Panc1 (cell line): ENCODE measurements at regions of chr16 and their contacts with region 1.

Region 1: GRCh38 chr16:16861546-16861945 is 482.6 kb downstream of the NPIPA7 start:
- DNase-seq: peak; percentile 46
- ATAC-seq: peak; percentile 70
- H3K4me3 ChIP-seq: no peak overlapping the region
- H3K27ac ChIP-seq: no peak overlapping the region
- H3K4me1 ChIP-seq: no peaks in the 10 kb centered on the region
- H3K27me3 ChIP-seq: peaks cover 6% of the 10 kb centered on the region; the same call in 1 of the 2 replicates
- CTCF ChIP-seq: peak; percentile 88

Region 2: GRCh38 chr16:16850243-16850642 is 11.3 kb before region 1 on chr16:
- CTCF ChIA-PET with region 1: no interaction called
- POLR2A ChIA-PET with region 1: no interaction called
- in situ Hi-C with region 1: no loop called
- intact Hi-C with region 1: no loop called
- DNase-seq: no peak
- ATAC-seq: no peak
- H3K4me3 ChIP-seq: no peak overlapping the region
- H3K27ac ChIP-seq: no peak overlapping the region
- H3K4me1 ChIP-seq: no peaks in the 10 kb centered on the region
- H3K27me3 ChIP-seq: no peaks in the 10 kb centered on the region
- CTCF ChIP-seq: no peak

Region 3: GRCh38 chr16:17194190-17194780 is 332.7 kb after region 1 on chr16:
- CTCF ChIA-PET with region 1: no interaction called
- POLR2A ChIA-PET with region 1: no interaction called
- in situ Hi-C with region 1: no loop called
- intact Hi-C with region 1: no loop called
- DNase-seq: no peak
- ATAC-seq: no peak
- H3K4me3 ChIP-seq: no peak overlapping the region
- H3K27ac ChIP-seq: no peak overlapping the region
- H3K4me1 ChIP-seq: no peaks in the 10 kb centered on the region
- H3K27me3 ChIP-seq: no peaks in the 10 kb centered on the region
- CTCF ChIP-seq: peak; percentile 74

Region 4: GRCh38 chr16:17467923-17468540 is 606.5 kb after region 1 on chr16:
- CTCF ChIA-PET with region 1: interaction called, 7 read pairs
- POLR2A ChIA-PET with region 1: no interaction called
- in situ Hi-C with region 1: no loop called
- intact Hi-C with region 1: loop called (anchors 5 kb)
- DNase-seq: no peak
- ATAC-seq: peak; percentile 68
- H3K4me3 ChIP-seq: no peak overlapping the region; a peak in 1 of 4 replicates
- H3K27ac ChIP-seq: no peak overlapping the region
- H3K4me1 ChIP-seq: peaks cover 7% of the 10 kb centered on the region
- H3K27me3 ChIP-seq: peaks cover 36% of the 10 kb centered on the region
- CTCF ChIP-seq: peak; percentile 82